ENCODE measurements at regions of chr6 and their contacts with region 1.

Region 1: GRCh38 chr6:116561377-116562018 is 7.9 kb downstream of the CALHM4 start:
- DNase-seq: peak; percentile 55
- CTCF ChIP-seq: peak; percentile 96

Region 2: GRCh38 chr6:116217069-116217468 is 344.4 kb before region 1 on chr6:
- CTCF ChIA-PET with region 1: interaction called, 24 read pairs
- POLR2A ChIA-PET with region 1: no interaction called
- DNase-seq: no peak
- CTCF ChIP-seq: peak; percentile 23

Region 3: DNA sequence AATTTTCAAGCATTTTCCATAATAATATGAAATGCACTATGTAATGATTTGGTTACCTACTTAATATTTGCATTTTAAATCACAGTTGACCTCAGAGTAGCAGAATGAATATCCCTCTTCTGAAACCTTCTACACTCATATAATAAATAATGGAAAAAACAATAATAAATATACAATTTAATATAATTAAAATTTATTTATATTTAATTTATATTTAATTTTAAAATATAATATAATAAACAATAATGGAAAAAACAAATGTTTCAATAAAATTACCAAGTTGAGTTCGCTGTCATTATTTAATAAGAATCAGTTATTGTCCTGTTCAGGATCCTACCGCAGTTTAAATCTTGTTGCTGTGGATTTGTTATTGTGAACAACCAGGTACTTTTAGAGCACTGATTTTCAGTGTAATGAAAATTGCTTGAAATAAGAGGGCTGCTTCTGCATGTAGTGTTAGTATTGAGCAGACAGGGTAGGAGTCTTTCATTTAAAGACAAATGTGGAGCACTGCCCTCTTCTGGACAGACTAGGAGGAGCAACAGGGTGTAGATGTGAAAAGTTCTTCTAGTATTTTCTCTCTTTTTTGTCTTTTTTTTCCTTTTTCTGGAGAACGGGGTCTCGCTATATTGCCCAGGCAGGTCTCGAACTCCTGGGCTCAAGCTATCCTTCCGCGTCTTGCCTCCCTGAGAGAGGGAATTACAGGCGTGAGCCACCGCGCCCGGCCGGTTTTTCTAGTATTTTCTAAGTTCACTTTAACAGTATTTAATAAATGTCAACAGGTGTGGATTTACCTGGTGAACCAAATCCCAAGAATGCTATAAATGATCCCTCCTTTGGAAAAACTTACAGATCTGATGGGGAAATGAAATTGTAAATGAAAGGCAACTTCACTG is 29.6 kb before region 1 on chr6:
- CTCF ChIA-PET with region 1: interaction called, 32 read pairs
- POLR2A ChIA-PET with region 1: no interaction called
- DNase-seq: peak; percentile 58
- CTCF ChIP-seq: peak; percentile 76

Region 4: DNA sequence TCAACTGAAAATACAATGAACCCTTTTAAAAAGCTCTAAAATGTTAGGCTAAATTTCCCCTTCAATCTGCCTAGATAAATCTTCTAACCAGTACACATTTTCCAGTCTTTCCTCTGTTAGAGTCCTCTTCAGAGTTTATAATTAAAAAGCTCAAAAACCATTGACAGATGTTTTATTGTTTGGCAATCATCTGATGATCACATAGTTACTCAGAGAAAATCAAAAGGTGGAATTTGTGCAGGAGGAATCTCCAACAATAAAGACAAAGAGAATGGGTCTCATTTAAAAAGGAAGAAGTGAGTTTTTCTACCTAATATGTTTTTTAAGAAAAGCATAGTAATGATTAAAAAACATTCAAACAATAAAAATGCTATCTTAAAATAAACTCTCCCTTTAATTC is 19.1 kb before region 1 on chr6:
- CTCF ChIA-PET with region 1: interaction called, 40 read pairs
- POLR2A ChIA-PET with region 1: no interaction called
- DNase-seq: no peak
- CTCF ChIP-seq: no peak

Region 5: GRCh38 chr6:116550796-116551195 is 10.7 kb before region 1 on chr6:
- CTCF ChIA-PET with region 1: interaction called, 27 read pairs
- POLR2A ChIA-PET with region 1: no interaction called
- DNase-seq: no peak
- CTCF ChIP-seq: no peak